ENCODE measurements at regions of chr9 and their contacts with region 1.

Region 1: GRCh38 chr9:114538241-114538640 is 33.0 kb upstream of the WHRN start:
- DNase-seq: peak; percentile 88
- ATAC-seq: peak; percentile 100
- H3K4me3 ChIP-seq: no peak overlapping the region
- H3K27ac ChIP-seq: no peak overlapping the region
- H3K4me1 ChIP-seq: peaks cover 4 to 13% of the 10 kb centered on the region in 2 experiments; a peak in 3 of 4 replicates
- H3K27me3 ChIP-seq: no peaks in the 10 kb centered on the region
- CTCF ChIP-seq: peak; percentile 26 to 55 (median 54); a peak in 4 of 6 replicates
- POLR2A ChIP-seq: peak; percentile 38
- RAD21 ChIP-seq: peak; percentile 74

Region 2: DNA sequence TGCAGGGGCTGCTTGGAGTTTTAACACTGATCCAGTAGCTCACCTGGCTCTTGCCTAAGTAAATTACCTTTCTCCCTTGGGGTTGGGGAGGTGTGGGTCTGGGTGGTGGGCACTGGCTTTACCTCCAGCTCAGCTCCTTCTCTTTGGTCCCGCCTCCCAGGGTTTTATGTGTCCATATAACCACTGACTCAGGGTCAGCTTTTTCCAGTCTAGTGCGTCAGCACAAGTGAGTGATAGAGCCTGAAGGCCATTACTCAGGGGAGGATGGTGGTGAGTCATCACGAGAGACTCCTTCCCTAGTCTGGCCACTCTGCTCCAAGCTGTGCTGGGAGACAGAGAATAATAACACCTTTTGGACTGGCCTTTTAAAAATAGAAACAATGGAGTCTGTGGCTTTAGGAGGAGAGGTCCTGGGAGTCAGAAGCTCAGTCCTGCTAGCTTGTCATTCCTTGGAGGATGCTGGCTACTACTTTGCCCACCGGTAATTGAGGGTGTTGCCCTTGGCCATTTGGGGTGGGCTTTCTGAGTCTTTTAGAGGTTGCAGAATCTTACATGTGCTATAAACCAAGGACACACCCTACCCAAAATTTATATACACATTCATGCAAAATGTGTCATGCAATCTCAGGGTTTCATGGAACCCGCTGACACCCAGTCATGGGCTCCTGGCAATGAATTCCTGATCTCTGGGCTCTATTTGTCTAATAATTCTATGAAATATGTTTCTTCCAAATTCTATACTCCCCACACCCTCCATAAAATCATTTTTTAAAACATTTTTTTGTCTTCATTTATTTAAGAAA is 13.8 kb after region 1 on chr9:
- CTCF ChIA-PET with region 1: interaction called, 7 read pairs
- POLR2A ChIA-PET with region 1: interaction called, 10 read pairs
- RAD21 ChIA-PET with region 1: interaction called in 1 of 2 experiments, 3 read pairs
- intact Hi-C with region 1: no loop called
- DNase-seq: peak; percentile 92
- ATAC-seq: peak; percentile 99
- H3K4me3 ChIP-seq: peak overlapping the region in 1 of 2 experiments; percentile 44; a peak in 2 of 4 replicates
- H3K27ac ChIP-seq: peak overlapping the region; percentile 42
- H3K4me1 ChIP-seq: peaks cover 16 to 17% of the 10 kb centered on the region in 2 experiments
- H3K27me3 ChIP-seq: no peaks in the 10 kb centered on the region
- CTCF ChIP-seq: no peak
- POLR2A ChIP-seq: no peak
- RAD21 ChIP-seq: peak; percentile 36; the same call in 1 of the 2 replicates

Region 3: GRCh38 chr9:114574438-114574837 is 36.2 kb after region 1 on chr9:
- CTCF ChIA-PET with region 1: no interaction called
- POLR2A ChIA-PET with region 1: no interaction called
- RAD21 ChIA-PET with region 1: no interaction called
- intact Hi-C with region 1: no loop called
- DNase-seq: no peak
- ATAC-seq: no peak
- H3K4me3 ChIP-seq: no peak overlapping the region
- H3K27ac ChIP-seq: no peak overlapping the region
- H3K4me1 ChIP-seq: no peaks in the 10 kb centered on the region
- H3K27me3 ChIP-seq: no peaks in the 10 kb centered on the region
- CTCF ChIP-seq: no peak
- POLR2A ChIP-seq: no peak
- RAD21 ChIP-seq: no peak

Region 4: GRCh38 chr9:114594136-114594535 is 55.9 kb after region 1 on chr9:
- CTCF ChIA-PET with region 1: no interaction called
- POLR2A ChIA-PET with region 1: no interaction called
- RAD21 ChIA-PET with region 1: no interaction called
- intact Hi-C with region 1: no loop called
- DNase-seq: no peak
- ATAC-seq: no peak
- H3K4me3 ChIP-seq: no peak overlapping the region
- H3K27ac ChIP-seq: no peak overlapping the region
- H3K4me1 ChIP-seq: peaks cover 3 to 5% of the 10 kb centered on the region in 2 experiments
- H3K27me3 ChIP-seq: no peaks in the 10 kb centered on the region
- CTCF ChIP-seq: no peak
- POLR2A ChIP-seq: no peak
- RAD21 ChIP-seq: no peak